Mammary epithelial cell (primary cell): ENCODE measurements at regions of chr2 and their contacts with region 1.

Region 1: DNA sequence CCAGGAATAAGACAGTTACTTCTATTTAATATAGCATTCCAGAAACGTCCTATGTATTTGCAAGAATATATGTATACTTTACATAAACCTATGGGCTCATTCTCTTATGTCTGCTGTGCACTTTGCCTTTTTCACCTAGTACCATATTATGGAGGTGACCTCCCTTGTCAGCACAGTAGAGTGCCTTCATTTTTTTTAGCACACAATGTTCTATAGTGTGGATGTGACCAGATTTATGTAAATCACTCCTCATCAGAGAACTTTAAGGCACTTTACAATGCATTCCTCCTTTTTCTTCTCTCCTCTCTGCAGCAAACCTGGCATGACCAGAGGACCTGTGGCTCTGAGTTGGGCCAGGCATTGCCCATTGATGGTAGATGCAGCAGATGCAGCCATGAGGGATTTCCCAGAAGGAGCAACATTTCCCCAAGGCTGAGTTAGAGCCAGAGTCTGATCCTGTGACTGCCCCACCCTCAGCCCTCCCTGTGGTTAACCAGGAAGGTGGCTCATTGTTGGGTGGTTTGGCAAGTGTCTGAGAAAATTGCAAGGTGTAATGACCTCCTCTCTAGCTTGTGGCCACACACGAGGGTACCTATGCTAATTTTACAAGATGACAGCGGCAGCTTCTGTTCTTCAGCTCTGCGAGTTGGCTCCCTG is 76.5 kb upstream of the DLX2 start:
- DNase-seq: peak; percentile 98
- H3K4me3 ChIP-seq: no peak overlapping the region
- H3K27ac ChIP-seq: peak overlapping the region; percentile 11
- H3K4me1 ChIP-seq: peaks cover 33% of the 10 kb centered on the region
- H3K27me3 ChIP-seq: no peaks in the 10 kb centered on the region
- CTCF ChIP-seq: no peak

Region 2: DNA sequence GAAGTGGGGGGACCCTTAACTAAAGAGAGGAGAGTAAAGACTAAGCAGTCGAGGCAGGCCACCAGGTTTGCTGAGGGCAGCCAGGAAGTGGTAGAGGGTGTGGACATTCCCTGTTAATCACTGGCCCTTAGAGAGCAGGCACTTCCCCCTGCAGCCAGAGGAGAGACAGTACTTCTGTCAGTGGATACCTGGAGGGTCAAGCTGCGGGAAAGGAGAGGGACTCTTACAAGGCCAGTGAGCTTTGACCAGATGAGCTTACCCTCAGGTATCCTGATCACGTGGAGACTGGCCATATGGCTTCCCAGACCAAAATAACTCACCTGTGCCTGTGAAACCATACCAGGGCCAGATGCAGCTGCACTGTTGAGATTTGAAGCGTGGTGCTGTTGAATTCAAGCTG is 276.8 kb after region 1 on chr2:
- CTCF ChIA-PET with region 1: no interaction called
- dilution Hi-C with region 1: no loop called
- in situ Hi-C with region 1: loop called in 1 of 2 experiments (anchors 5 kb)
- intact Hi-C with region 1: no loop called
- DNase-seq: no peak
- H3K4me3 ChIP-seq: no peak overlapping the region
- H3K27ac ChIP-seq: peak overlapping the region; percentile 69
- H3K4me1 ChIP-seq: peaks cover 79% of the 10 kb centered on the region
- H3K27me3 ChIP-seq: no peaks in the 10 kb centered on the region
- CTCF ChIP-seq: peak; percentile 9 to 28

Region 3: DNA sequence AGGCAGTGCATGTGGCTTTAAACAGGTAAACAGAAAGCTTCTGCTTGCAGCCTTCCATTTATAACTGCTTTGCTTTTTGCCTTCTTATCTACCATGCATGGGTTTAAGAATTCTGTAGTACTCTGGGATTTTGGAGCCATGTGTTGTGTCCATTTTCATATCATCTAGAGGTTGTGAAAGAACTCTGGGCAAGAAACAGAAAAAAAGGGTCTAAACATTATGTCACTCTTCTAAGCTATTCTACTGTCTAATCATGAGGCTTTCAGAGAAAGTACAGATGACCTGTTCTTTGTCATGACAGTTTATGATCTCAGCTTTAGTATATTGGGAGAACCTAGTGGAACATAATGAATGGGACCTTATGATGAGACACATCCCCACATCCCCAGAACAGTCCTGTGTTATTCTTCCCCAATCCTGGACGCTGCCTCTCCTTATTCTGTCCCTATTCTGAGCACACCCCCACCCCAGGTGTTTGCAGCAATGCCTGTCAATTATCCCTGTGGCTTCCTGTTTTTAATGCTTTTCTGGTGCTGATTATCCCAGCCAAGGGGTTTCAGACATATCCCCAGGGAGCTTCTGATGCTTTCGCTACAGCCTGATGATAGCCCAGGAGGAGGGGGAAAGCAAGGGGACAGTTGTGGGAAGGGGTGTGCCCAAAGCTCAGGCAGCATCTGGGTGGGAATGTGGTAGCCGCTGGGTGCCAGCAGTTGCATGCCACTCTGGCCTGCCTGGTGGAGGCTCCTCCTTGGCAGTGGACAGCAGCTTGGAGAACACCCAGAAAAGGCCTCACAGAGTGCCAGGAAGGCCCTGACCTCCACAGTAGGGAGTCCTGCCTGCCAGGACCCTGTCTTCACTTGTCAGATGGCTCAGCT is 727.0 kb after region 1 on chr2:
- CTCF ChIA-PET with region 1: no interaction called
- dilution Hi-C with region 1: no loop called
- in situ Hi-C with region 1: no loop called
- intact Hi-C with region 1: no loop called
- DNase-seq: no peak
- H3K4me3 ChIP-seq: no peak overlapping the region
- H3K27ac ChIP-seq: no peak overlapping the region
- H3K4me1 ChIP-seq: no peaks in the 10 kb centered on the region
- H3K27me3 ChIP-seq: peaks cover 6% of the 10 kb centered on the region
- CTCF ChIP-seq: no peak